ENCODE measurements at regions of chr19 and their contacts with region 1.

Region 1: DNA sequence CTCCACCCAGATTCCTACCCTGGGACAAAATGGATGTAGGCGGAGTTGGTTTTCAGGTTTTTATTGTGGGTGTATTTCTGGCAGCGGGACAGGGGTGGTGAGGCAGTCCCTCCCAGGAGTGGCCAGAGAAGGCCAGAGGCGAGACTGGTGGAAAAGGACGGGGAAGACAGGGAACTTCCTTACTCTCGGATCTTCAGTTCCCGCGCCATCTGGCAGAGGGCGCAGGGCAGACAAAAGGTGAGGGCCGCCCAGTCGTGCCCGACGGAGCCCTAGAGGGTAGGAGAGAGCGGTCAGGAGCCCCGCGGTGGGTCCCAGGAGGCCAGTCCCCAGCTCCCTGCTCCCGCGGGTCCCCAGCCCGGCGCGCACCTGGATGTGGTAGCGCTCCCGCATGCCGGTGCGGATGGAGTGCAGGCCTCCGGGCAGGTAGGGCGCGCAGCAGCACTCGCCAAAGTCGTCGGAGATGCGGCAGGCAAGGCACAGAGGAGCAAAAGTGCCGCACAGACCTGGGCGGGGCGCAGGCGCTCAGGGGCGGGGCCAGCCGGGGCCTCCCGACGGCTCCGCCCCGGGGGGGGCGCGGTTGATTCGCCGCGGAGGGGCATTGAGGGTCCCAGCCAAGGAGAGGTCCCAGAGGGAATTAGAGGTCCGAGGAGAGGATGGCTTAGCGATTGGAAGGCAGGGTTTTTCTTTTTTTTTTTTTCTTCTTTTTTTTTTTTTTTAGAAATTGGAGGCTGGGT is 3.0 kb downstream of the CNFN start:
- DNase-seq: peak; percentile 87
- H3K4me3 Mint-ChIP-seq: peak overlapping the region; percentile 74
- H3K27ac Mint-ChIP-seq: peak overlapping the region; percentile 69
- H3K4me1 Mint-ChIP-seq: peaks cover 10% of the 10 kb centered on the region
- H3K27me3 Mint-ChIP-seq: peaks cover 30% of the 10 kb centered on the region
- CTCF ChIP-seq: peak; percentile 61

Region 2: DNA sequence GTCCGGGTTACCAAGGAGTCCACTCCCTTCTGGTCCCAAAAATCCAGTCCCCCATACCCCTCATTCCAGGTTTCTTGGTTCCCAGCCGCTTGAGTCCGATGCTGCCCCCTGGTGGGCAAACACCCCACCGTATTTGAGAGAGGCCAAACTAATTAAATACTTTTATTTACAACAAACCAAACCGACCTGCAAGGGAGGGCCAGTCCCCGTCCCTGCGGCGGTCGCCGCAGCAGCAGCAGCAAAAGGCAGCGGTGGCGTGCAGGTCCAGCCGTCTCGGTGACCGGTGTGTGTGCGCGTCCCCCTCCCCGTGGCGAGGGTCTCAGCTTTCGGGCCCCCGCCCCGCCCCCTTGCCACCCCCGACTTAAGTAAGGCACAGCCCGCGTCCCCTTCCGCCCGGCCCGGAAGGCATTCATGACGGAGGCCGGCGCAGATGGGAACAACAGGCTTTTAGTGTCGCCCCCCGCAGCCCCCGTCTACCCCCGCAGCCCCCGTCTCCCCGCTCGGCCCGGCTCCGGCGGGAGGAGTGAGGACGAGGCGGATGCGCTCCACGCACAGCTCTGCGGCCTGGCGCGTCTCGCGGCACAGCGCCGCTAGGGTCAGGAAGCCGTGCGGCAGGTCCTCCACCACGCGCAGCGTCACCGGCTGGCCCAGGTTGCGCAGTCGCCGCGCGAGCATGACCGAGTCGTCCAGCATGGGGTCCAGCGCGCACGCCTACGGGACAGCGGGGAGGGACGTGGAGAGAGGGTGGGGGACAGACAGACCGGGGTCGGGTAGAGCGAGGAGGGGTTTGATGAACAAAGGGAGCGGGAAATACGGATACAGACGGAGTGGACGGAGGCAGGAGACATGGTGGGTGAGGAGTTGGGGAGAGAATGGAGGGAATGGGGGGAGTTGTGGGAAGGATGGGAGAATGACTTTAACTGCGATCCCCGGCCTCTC is 14.5 kb after region 1 on chr19:
- CTCF ChIA-PET with region 1: interaction called, 10 read pairs
- POLR2A ChIA-PET with region 1: interaction called, 10 read pairs
- intact Hi-C with region 1: no loop called
- DNase-seq: peak; percentile 66
- H3K4me3 Mint-ChIP-seq: peak overlapping the region; percentile 47
- H3K27ac Mint-ChIP-seq: no peak overlapping the region
- H3K4me1 Mint-ChIP-seq: peaks cover 31% of the 10 kb centered on the region
- H3K27me3 Mint-ChIP-seq: no peaks in the 10 kb centered on the region
- CTCF ChIP-seq: peak; percentile 83

Region 3: DNA sequence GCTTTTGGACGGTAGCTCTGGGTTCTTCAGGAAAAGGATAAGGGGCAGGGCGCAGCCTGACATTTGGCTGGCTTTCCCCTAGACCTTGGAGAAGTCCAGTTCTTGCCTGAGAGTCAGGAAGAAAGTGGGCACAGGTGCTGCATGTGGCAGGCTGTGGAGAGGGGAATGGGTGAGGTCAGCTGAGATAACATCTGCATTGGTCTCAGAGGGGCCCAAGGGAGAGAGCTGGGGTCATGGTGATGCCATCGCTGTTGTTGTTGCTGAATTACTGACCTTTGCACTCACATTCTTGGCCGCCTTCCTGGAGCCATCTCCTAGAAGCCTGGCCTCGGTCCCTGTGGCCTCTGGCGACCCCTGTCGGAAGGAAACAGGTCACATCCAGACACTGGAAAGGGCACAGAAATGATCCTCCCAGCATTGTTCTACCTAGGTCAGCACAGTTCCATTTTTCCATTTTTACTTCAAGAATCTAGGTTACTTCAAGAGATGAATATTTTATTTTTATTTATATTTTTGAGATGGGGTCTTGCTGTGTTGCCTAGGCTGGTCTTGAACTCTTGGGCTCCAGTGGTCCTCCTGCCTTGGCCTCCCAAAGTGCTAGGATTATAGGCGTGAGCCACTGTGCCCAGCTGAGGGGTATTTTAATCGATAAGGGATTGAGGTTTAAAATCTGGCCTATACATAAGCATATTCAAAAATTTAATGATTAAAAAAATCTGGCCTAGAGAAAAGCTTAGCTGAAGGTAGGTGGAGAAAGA is 46.5 kb after region 1 on chr19:
- CTCF ChIA-PET with region 1: interaction called, 4 read pairs
- POLR2A ChIA-PET with region 1: no interaction called
- intact Hi-C with region 1: loop called (anchors 1 kb)
- DNase-seq: peak; percentile 90
- H3K4me3 Mint-ChIP-seq: no peak overlapping the region
- H3K27ac Mint-ChIP-seq: no peak overlapping the region
- H3K4me1 Mint-ChIP-seq: peaks cover 11% of the 10 kb centered on the region
- H3K27me3 Mint-ChIP-seq: no peaks in the 10 kb centered on the region
- CTCF ChIP-seq: peak; percentile 77